ENCODE measurements at regions of chr1 and their contacts with region 1.

Region 1: GRCh38 chr1:201649761-201650622 is 111.1 kb downstream of the NAV1 start:
- DNase-seq: peak; percentile 70
- ATAC-seq: peak; percentile 46
- H3K4me3 ChIP-seq: peak overlapping the region; percentile 67
- H3K27ac ChIP-seq: peak overlapping the region; percentile 93
- H3K4me1 ChIP-seq: peaks cover 35% of the 10 kb centered on the region
- H3K27me3 ChIP-seq: no peaks in the 10 kb centered on the region
- CTCF ChIP-seq: no peak
- POLR2A ChIP-seq: peak; percentile 54; the same call in 1 of the 2 replicates
- RAD21 ChIP-seq: no peak

Region 2: GRCh38 chr1:201625226-201625761 is 24.7 kb before region 1 on chr1:
- CTCF ChIA-PET with region 1: no interaction called
- POLR2A ChIA-PET with region 1: interaction called, 16 read pairs
- dilution Hi-C with region 1: no loop called
- in situ Hi-C with region 1: no loop called
- intact Hi-C with region 1: loop called (anchors 1 kb)
- DNase-seq: peak; percentile 98
- ATAC-seq: peak; percentile 93
- H3K4me3 ChIP-seq: no peak overlapping the region
- H3K27ac ChIP-seq: peak overlapping the region; percentile 2; the same call in 1 of the 2 replicates
- H3K4me1 ChIP-seq: peaks cover 15% of the 10 kb centered on the region
- H3K27me3 ChIP-seq: no peaks in the 10 kb centered on the region
- CTCF ChIP-seq: peak; percentile 59
- POLR2A ChIP-seq: no peak
- RAD21 ChIP-seq: peak; percentile 69

Region 3: GRCh38 chr1:201696217-201696761 is 46.3 kb after region 1 on chr1:
- CTCF ChIA-PET with region 1: no interaction called
- POLR2A ChIA-PET with region 1: no interaction called
- dilution Hi-C with region 1: no loop called
- in situ Hi-C with region 1: no loop called
- intact Hi-C with region 1: loop called (anchors 2 kb)
- DNase-seq: peak; percentile 93
- ATAC-seq: peak; percentile 86
- H3K4me3 ChIP-seq: no peak overlapping the region
- H3K27ac ChIP-seq: peak overlapping the region; percentile 50
- H3K4me1 ChIP-seq: peaks cover 37% of the 10 kb centered on the region
- H3K27me3 ChIP-seq: no peaks in the 10 kb centered on the region
- CTCF ChIP-seq: no peak
- POLR2A ChIP-seq: no peak
- RAD21 ChIP-seq: peak; percentile 18

Region 4: DNA sequence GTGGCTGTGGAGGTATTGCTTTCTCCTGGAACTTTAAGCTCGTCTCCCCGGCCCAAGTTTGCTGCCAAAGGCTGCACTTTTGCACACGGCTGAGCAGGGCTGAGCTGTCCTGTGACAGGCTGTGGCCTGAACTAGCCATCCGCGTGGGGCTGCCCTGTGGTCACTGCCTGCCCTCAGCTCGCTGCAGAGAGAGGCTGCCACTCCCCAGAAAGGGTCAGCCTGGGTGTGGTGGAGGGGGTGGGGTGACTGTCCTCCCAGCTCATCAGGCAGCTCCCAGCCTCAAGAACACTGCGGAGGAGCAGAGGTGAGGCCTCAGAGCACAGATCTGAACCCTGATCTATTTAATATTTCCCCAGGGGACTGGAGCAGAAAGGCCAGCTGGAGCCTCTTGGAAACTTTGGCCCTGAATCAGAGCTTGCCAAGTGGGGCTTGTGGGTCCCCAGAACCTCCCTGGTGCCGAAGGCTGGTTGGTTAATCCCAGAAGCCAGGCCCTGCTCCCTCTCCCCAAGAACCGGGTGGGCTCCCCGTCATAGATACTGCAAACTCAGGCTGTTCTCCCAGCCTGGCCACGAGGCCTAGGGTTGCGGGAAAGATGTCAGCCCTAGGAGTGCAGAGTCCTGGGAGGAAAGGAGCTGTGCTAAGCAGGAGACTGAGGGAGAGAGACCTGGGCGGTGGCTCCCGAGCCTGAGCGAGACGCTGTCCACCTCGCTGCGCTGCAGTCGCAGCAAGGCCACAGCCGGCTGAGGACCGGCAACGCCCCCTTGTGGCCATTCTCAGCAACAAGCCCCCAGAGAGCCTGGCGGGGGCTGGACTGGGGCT is 53.8 kb after region 1 on chr1:
- CTCF ChIA-PET with region 1: interaction called, 5 read pairs
- POLR2A ChIA-PET with region 1: no interaction called
- dilution Hi-C with region 1: no loop called
- in situ Hi-C with region 1: no loop called
- intact Hi-C with region 1: loop called (anchors 2 kb)
- DNase-seq: peak; percentile 77
- ATAC-seq: peak; percentile 81
- H3K4me3 ChIP-seq: no peak overlapping the region
- H3K27ac ChIP-seq: peak overlapping the region; percentile 69
- H3K4me1 ChIP-seq: peaks cover 20% of the 10 kb centered on the region
- H3K27me3 ChIP-seq: no peaks in the 10 kb centered on the region
- CTCF ChIP-seq: peak; percentile 95
- POLR2A ChIP-seq: peak; percentile 61; the same call in 1 of the 2 replicates
- RAD21 ChIP-seq: peak; percentile 97

Region 5: DNA sequence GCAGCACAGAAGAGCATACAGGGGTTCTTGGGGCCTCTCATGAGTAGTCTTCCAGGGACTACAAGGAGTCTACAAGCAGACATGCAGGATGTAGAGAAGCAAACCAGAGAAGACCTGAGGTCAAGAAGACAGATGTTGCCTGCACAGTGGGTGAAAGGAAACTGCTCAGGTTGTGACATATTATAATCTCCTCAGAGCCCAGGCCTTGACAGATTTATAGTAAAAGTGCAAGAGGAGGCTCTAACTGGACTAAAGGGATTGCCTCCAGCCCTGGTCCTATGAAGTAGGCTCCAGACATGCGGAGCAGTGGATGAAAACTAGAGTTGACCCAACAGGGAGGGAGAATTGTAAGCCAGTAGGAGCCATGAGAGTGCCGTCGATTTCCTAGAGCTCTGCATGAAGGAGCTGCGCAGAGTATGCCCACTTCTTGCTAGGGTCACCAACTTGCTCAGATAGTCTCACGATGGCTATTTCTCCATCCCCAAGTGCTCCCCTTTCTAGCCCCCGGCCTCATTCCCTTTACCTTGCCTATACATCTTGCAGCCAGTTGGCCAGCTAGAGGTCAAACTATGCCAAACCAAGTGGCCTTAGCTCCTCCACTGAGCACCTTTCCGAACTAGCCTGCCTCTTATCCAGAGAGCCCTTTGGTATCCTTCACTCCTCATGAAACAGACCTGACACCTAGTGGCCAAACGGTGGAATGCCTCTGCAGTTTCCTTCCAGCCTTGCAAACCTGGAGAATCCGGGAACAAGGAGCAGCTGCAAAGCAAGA is 142.7 kb after region 1 on chr1:
- CTCF ChIA-PET with region 1: no interaction called
- POLR2A ChIA-PET with region 1: interaction called, 20 read pairs
- dilution Hi-C with region 1: no loop called
- in situ Hi-C with region 1: no loop called
- intact Hi-C with region 1: loop called (anchors 5 kb)
- DNase-seq: peak; percentile 85
- ATAC-seq: peak; percentile 84
- H3K4me3 ChIP-seq: no peak overlapping the region
- H3K27ac ChIP-seq: peak overlapping the region; percentile 69
- H3K4me1 ChIP-seq: peaks cover 32% of the 10 kb centered on the region
- H3K27me3 ChIP-seq: no peaks in the 10 kb centered on the region
- CTCF ChIP-seq: peak; percentile 97
- POLR2A ChIP-seq: peak; percentile 35; the same call in 1 of the 2 replicates
- RAD21 ChIP-seq: peak; percentile 99

Measured in IMR-90 (cell line).